PC-9 (cell line): ENCODE measurements at regions of chr1 and their contacts with region 1.

Region 1: GRCh38 chr1:65174585-65174984 is 26.6 kb downstream of the AK4 start:
- DNase-seq: peak; percentile 74 to 98
- H3K4me3 ChIP-seq: no peak overlapping the region
- H3K27ac ChIP-seq: peak overlapping the region; percentile 81
- H3K4me1 ChIP-seq: peaks cover 83% of the 10 kb centered on the region
- H3K27me3 ChIP-seq: no peaks in the 10 kb centered on the region
- CTCF ChIP-seq: no peak

Region 2: DNA sequence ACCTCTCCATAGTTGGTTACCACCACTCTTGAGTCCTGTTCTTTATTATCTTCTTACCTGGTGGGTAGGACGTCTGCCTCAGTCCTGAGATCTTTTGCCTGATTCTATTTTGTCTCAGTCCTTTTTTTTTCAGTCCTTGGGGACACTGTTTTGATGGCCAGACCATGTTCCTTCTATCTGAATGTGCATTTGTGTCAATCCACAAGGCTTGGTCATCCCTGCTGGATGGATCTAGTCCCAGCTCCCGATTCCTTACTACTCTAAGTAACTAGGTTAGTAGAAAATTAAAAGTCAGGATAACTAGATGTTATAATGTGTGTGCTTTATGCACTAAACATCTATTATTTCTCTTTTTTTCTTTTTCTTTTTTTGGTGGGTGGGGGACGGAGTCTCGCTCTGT is 54.6 kb before region 1 on chr1:
- CTCF ChIA-PET with region 1: interaction called, 12 read pairs
- POLR2A ChIA-PET with region 1: no interaction called
- intact Hi-C with region 1: no loop called
- DNase-seq: no peak
- H3K4me3 ChIP-seq: no peak overlapping the region
- H3K27ac ChIP-seq: no peak overlapping the region
- H3K4me1 ChIP-seq: no peaks in the 10 kb centered on the region
- H3K27me3 ChIP-seq: no peaks in the 10 kb centered on the region
- CTCF ChIP-seq: no peak

Region 3: GRCh38 chr1:65214340-65215027 is 39.9 kb after region 1 on chr1:
- CTCF ChIA-PET with region 1: no interaction called
- POLR2A ChIA-PET with region 1: no interaction called
- intact Hi-C with region 1: no loop called
- DNase-seq: no peak
- H3K4me3 ChIP-seq: no peak overlapping the region
- H3K27ac ChIP-seq: no peak overlapping the region
- H3K4me1 ChIP-seq: no peaks in the 10 kb centered on the region
- H3K27me3 ChIP-seq: no peaks in the 10 kb centered on the region
- CTCF ChIP-seq: no peak